ENCODE measurements at regions of chr7 and their contacts with region 1.

Region 1: DNA sequence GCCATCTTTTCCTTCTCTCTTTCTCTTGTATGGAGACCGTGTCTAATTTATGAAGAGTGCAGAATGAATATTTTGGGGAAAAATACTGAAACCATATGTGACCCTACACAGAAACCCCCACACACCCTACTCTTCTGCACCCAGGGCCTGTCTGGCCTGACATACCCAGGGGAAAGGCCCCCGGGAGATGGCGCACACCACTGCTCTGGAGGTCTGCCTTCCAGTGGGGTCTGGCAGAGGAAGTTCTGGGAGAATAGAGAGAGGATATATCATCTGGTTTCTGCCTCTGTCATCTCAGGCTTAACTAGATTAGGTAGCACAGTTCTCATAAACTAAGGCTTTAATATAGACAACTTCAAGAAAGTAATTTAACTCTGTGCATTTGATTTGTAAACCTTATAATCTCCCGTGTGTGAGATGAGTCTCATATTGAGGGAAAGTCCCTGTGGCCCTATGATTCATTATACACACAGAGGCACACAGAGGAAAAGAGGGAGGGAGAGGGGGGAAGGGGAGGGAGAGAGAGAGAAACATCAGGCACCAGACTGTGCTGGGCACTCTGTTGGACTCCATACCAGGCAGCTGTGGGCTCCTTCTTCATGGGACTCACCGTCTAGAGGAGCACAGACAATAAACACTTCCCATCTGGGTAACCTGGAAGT is 123.3 kb downstream of the AOAH start:
- DNase-seq: no peak
- H3K4me3 Mint-ChIP-seq: no peak overlapping the region
- H3K27ac Mint-ChIP-seq: peak overlapping the region; percentile 70
- H3K4me1 Mint-ChIP-seq: peaks cover 69% of the 10 kb centered on the region
- H3K27me3 Mint-ChIP-seq: no peaks in the 10 kb centered on the region

Region 2: GRCh38 chr7:36526863-36527548 is 74.0 kb before region 1 on chr7:
- intact Hi-C with region 1: loop called (anchors 5 kb)
- DNase-seq: no peak
- H3K4me3 Mint-ChIP-seq: peak overlapping the region; percentile 26
- H3K27ac Mint-ChIP-seq: peak overlapping the region; percentile 74
- H3K4me1 Mint-ChIP-seq: peaks cover 29% of the 10 kb centered on the region
- H3K27me3 Mint-ChIP-seq: no peaks in the 10 kb centered on the region

Region 3: DNA sequence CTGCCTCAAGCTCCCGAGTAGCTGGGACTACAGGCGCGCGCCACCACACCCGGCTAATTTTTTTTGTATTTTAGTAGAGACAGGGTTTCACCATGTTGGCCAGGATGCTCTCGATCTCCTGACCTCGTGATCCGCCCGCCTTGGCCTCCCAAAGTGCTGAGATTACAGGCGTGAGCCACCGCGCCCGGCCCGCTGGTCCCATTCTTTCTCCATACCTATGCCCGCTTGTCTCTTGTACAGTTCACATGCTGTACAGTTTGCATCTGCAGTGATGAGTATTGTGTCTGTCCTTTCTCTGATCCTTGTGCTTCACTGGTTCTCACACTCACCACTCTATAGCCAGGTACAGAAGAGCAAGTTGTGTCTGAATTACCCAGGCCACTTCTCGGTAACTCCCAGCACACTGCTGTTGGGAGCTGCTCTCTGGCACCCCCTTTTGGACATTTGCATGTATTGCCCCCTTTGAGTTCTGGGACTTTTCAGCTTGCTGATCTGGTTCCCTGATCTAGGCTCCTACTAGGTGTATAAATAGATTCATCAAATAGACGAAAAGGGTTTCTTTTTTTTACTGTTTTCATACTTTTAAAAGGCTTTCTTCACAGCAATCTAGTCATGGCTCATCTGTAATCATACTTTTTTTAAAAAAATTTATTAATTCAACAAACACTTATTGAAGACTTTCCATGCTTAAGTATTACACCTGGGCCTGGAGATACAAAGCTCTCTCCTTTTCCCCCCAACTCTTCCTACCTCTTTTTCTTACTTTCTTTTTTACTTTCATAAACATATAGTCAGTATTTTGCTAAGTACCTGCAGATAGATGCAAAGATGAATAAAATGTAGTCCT is 69.8 kb after region 1 on chr7:
- intact Hi-C with region 1: loop called (anchors 5 kb)
- DNase-seq: peak; percentile 57
- H3K4me3 Mint-ChIP-seq: peak overlapping the region; percentile 57
- H3K27ac Mint-ChIP-seq: peak overlapping the region; percentile 86
- H3K4me1 Mint-ChIP-seq: peaks cover 58% of the 10 kb centered on the region
- H3K27me3 Mint-ChIP-seq: no peaks in the 10 kb centered on the region

Measured in activated T-helper 2 cell treated with anti-CD3 and anti-CD28 coated beads, Interferon-gamma antibody, Interleukin-2, Interleukin-4, amounts not matched to agents 10 μg/mL and 5 μg/mL and 100 μg/mL, durations not matched to agents 14 hours and 24 hours and 36 hours (primary cell).